HepG2 (cell line): ENCODE measurements at regions of chr19 and their contacts with region 1.

Region 1: DNA sequence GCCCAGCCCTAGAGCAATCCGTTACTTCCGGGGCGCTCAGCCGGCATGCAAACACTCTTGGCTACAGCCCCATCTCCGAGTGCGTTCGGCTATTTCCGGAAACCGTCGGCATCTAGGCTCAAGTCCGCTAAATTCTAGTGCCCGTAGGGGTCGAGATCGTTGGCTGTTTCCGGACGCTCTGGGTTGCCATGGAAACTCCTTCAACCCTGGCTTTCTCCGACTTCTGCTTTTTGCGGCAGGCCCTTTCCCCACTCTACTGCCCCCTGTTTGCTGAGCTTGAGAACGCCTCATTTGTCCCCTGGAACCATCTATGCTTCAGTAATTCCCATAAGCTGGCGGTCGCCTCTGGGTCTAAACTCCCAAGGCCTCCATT is 533 bp upstream of the PIK3R2 start:
- DNase-seq: peak; percentile 98
- ATAC-seq: peak; percentile 75
- H3K4me3 ChIP-seq: peak overlapping the region; percentile 47 to 98 (median 66); a peak in 5 of 6 replicates
- H3K27ac ChIP-seq: peak overlapping the region; percentile 94
- H3K4me1 ChIP-seq: peaks cover 53% of the 10 kb centered on the region
- H3K27me3 ChIP-seq: no peaks in the 10 kb centered on the region; a peak in 1 of 5 replicates
- CTCF ChIP-seq: peak; percentile 78
- EP300 ChIP-seq: no peak; a peak in 1 of 4 replicates
- POLR2A ChIP-seq: no peak
- RAD21 ChIP-seq: peak; percentile 66

Region 2: DNA sequence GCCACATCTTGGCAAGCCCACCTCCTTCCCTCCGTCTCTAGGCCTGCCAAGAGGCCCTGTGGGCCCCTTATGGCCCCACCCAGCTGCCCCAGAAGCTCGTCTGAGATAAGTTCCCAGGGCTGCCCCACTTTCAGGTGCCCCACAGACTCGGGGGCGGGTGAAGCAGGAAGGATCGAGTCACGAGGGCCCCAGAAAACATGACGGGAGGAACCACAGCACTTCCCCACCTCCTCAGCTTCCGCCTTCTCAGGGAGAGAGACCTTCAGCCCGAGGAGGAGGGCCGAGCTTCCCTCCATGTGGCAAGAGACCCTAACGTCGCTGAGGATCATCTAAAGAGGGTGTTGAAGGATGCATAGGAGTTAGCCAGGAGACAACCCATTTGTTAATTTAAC is 61.2 kb before region 1 on chr19:
- CTCF ChIA-PET with region 1: no interaction called
- POLR2A ChIA-PET with region 1: no interaction called
- in situ Hi-C with region 1: no loop called
- intact Hi-C with region 1: no loop called
- DNase-seq: no peak
- ATAC-seq: no peak
- H3K4me3 ChIP-seq: no peak overlapping the region; a peak in 1 of 6 replicates
- H3K27ac ChIP-seq: no peak overlapping the region
- H3K4me1 ChIP-seq: peaks cover 59% of the 10 kb centered on the region
- H3K27me3 ChIP-seq: no peaks in the 10 kb centered on the region; a peak in 2 of 5 replicates
- CTCF ChIP-seq: no peak
- EP300 ChIP-seq: no peak
- POLR2A ChIP-seq: no peak
- RAD21 ChIP-seq: no peak

Region 3: DNA sequence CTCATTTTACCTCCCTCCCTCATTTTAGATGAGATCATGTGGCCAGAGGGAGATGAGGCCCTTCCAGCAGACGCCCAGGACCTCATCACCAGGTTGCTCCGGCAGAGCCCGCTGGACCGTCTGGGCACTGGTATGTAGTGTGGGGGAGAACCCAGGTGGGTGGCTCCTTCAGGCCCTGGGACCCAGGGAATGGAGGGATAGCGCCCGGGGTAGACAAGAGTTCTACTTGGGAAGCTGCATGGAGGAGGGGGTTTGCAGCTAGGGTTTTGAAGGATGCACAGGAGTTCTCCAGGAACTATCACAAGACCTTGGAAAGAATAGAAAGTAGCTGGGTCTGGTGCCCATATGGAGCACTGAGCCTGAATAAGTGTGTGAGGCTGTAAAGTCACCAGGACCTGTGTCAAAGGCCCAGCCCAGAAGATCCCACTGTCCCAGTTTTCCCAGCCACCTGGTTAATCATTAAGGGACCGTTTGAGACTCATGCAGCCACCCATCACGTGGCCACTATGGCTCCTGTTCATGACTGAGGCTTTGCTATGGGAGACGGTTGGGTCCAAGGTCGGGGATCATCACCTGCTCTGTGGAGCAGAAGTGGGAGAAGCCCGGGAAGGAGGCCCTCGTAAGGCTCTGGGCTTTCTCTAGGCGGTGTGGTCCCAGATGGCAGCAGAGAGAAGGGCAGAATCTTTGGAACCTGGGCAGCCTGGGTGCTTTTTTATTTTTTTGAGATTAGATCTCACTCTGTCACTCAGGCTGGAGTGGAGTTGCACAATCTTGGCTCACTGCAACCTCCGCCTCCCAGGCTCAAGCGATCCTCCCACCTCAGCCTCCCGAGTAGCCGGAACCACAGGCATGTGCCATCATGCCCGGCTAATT is 16.5 kb before region 1 on chr19:
- CTCF ChIA-PET with region 1: no interaction called
- POLR2A ChIA-PET with region 1: interaction called, 14 read pairs
- in situ Hi-C with region 1: no loop called
- intact Hi-C with region 1: loop called (anchors 1 kb)
- DNase-seq: peak; percentile 98
- ATAC-seq: peak; percentile 97
- H3K4me3 ChIP-seq: peak overlapping the region in 2 of 3 experiments; percentile 19 to 41; a peak in 3 of 6 replicates
- H3K27ac ChIP-seq: peak overlapping the region; percentile 92
- H3K4me1 ChIP-seq: peaks cover 38% of the 10 kb centered on the region
- H3K27me3 ChIP-seq: no peaks in the 10 kb centered on the region
- CTCF ChIP-seq: peak; percentile 27
- EP300 ChIP-seq: peak in 1 of 2 experiments; percentile 87; a peak in 2 of 4 replicates
- POLR2A ChIP-seq: peak; percentile 64 to 71
- RAD21 ChIP-seq: no peak

Region 4: GRCh38 chr19:18141031-18141430 is 11.4 kb before region 1 on chr19:
- CTCF ChIA-PET with region 1: no interaction called
- POLR2A ChIA-PET with region 1: interaction called, 14 read pairs
- in situ Hi-C with region 1: no loop called
- intact Hi-C with region 1: loop called (anchors 1 kb)
- DNase-seq: no peak
- ATAC-seq: no peak
- H3K4me3 ChIP-seq: no peak overlapping the region
- H3K27ac ChIP-seq: no peak overlapping the region
- H3K4me1 ChIP-seq: peaks cover 20% of the 10 kb centered on the region
- H3K27me3 ChIP-seq: no peaks in the 10 kb centered on the region; a peak in 1 of 5 replicates
- CTCF ChIP-seq: no peak
- EP300 ChIP-seq: no peak
- POLR2A ChIP-seq: no peak
- RAD21 ChIP-seq: no peak

Region 5: DNA sequence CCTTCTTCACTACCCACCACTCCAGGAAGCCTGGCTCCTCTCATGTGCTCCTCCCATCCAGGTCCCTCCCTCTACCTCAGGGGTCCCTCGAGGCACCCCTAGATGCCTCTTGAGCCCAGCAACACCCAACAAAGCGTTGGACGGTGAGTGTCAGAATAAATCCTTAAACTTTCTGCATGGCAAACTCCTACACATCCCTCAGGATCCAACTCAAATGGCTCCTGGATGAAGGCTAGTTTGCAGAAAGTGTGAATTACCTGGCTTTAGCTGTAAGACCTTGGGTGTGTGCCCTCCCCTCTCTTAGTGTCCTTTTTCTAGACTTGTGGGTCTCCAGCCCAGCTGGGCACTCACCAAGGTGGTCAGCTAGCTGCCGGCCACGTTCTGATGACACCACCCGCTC is 45.9 kb after region 1 on chr19:
- CTCF ChIA-PET with region 1: no interaction called
- POLR2A ChIA-PET with region 1: no interaction called
- in situ Hi-C with region 1: no loop called
- intact Hi-C with region 1: no loop called
- DNase-seq: no peak
- ATAC-seq: no peak
- H3K4me3 ChIP-seq: no peak overlapping the region
- H3K27ac ChIP-seq: no peak overlapping the region
- H3K4me1 ChIP-seq: peaks cover 17% of the 10 kb centered on the region
- H3K27me3 ChIP-seq: no peaks in the 10 kb centered on the region; a peak in 1 of 5 replicates
- CTCF ChIP-seq: no peak
- EP300 ChIP-seq: no peak
- POLR2A ChIP-seq: no peak
- RAD21 ChIP-seq: no peak

Region 6: DNA sequence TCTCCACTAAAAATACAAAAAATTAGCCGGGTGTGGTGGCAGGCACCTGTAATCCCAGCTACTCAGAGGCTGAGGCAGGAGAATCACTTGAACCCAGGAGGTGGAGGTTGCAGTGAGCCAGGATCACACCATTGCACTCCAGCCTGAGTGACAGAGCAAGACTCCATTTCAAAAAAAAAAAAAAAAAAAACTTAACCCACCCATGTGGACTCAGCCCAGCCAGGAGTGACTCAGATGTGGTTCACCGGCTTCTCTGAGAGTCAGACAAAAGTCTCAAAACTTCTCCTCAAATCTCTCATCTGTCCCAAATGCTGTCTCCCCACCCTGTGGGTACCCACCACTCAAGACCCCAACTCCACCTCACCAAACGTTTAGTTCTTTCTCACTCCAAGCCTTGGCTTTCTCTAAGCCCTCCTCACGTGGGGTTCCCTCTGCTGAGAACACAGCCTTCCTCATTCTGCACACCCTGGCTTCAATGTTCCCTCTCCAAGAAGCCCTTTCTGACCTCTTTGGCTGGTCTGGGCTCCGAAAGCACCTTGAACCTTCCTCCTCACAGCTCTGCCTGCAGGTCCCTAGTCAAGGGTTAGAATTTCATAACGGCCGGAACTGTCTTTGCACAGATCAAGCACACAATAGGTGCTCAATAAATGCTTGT is 62.5 kb after region 1 on chr19:
- CTCF ChIA-PET with region 1: no interaction called
- POLR2A ChIA-PET with region 1: no interaction called
- in situ Hi-C with region 1: no loop called
- intact Hi-C with region 1: no loop called
- DNase-seq: no peak
- ATAC-seq: no peak
- H3K4me3 ChIP-seq: no peak overlapping the region
- H3K27ac ChIP-seq: no peak overlapping the region
- H3K4me1 ChIP-seq: no peaks in the 10 kb centered on the region
- H3K27me3 ChIP-seq: peaks cover 2 to 14% of the 10 kb centered on the region in 2 experiments; a peak in 3 of 5 replicates
- CTCF ChIP-seq: no peak
- EP300 ChIP-seq: no peak
- POLR2A ChIP-seq: no peak
- RAD21 ChIP-seq: no peak